Activated naive CD4-positive, alpha-beta T cell treated with anti-CD3 and anti-CD28 coated beads, Interleukin-2, amount 10 ng/mL, durations not matched to agents 7 days and 5 days (primary cell): ENCODE measurements at regions of chr10 and their contacts with region 1.

Region 1: DNA sequence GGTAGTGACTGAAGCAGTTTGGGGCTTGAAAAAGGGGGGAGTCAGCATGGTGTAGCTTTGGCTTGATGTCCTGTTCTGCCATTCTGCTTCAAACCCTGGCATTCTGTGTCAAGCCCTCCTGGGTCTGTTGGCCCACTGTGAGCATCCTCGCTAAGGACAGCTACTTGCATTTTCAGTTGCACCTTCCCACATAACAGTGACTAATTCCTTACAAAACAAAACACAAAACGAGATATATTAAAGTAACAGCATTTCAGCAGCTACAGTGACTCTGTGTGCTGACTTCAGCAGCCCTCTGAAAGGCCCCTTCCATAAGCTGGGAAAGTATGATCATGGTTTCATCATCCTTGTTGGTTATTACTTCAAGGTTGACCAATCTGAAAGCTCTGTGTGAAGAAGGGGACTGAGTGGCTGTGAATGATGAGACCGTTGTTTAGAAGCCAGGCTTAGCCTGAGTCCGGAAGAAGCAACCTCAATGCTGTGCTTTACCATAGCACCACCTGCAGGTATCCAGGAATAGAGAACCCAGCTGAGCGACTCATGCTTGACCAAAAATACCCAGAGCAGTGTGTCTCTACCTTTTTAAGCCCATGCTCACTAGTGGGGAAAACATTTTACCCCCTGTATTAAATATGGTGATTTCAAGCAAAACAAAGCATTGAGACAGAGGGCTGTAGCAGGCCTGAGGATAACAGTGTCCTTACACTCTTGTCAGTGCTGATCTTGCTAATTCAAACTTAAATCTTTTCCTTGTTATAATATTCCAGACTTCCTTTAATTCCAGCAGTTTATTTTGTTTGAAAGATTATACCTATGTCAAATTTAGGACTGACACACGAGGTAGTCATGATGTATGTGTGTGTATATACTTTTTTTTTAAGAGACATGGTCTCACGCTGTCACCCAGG is 42.6 kb upstream of the CC2D2B start:
- DNase-seq: peak; percentile 53
- H3K4me3 Mint-ChIP-seq: no peak overlapping the region
- H3K27ac Mint-ChIP-seq: no peak overlapping the region
- H3K4me1 Mint-ChIP-seq: peaks cover 11% of the 10 kb centered on the region
- H3K27me3 Mint-ChIP-seq: no peaks in the 10 kb centered on the region

Region 2: DNA sequence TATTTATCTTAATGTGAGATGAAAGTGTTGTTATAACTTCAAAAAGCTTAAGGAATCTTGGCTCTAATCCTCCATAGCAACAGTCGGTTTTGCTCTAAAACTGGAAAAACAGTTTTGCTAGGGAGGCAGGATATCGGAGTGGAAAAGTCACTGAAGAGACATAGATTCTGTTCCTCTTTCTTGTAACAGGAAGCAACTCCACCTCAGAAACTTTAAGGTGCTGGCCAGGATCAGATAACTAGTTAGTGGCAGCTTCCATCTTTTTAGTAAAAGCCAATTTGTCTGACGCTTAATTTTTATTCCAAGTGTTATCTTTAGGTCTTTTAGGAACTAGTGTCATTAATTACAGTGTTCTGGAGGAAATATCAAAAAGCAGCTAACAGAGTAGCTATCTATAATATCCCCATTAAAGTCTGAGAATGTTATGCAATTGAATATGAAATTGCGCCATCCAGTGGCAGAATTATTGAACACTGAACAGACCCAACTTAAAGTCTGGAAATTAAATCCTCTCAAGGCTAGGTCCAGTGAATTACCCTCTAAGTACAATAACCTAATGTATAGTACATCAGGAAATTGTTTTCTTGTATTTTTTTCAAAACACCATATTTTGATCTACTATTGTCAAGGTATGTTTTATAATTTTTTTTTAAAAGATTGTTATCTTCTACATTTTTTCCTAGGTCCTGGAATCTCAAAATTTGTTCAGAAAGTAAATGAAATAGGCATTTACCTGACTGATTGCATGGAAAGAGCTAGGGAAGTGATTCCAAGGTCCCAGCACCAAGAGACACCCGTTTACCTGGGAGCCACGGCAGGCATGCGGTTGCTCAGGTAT is 23.3 kb before region 1 on chr10:
- CTCF ChIA-PET with region 1: interaction called, 57 read pairs
- DNase-seq: peak; percentile 45
- H3K4me3 Mint-ChIP-seq: no peak overlapping the region
- H3K27ac Mint-ChIP-seq: no peak overlapping the region
- H3K4me1 Mint-ChIP-seq: peaks cover 11% of the 10 kb centered on the region
- H3K27me3 Mint-ChIP-seq: peaks cover 4% of the 10 kb centered on the region

Region 3: GRCh38 chr10:95880704-95881103 is 15.5 kb after region 1 on chr10:
- CTCF ChIA-PET with region 1: no interaction called
- DNase-seq: no peak
- H3K4me3 Mint-ChIP-seq: no peak overlapping the region
- H3K27ac Mint-ChIP-seq: no peak overlapping the region
- H3K4me1 Mint-ChIP-seq: no peaks in the 10 kb centered on the region
- H3K27me3 Mint-ChIP-seq: no peaks in the 10 kb centered on the region